Right cardiac atrium (tissue), 5 donors: ENCODE measurements at regions of chr1 and their contacts with region 1.

Region 1: GRCh38 chr1:42747125-42747524 is 7.1 kb upstream of the CLDN19 start:
- DNase-seq: peak; percentile 52 to 82 (median 81)
- ATAC-seq: peak; percentile 61 to 65
- H3K4me3 ChIP-seq: no peak overlapping the region
- H3K27ac ChIP-seq: no peak overlapping the region
- H3K4me1 ChIP-seq: no peaks in the 10 kb centered on the region
- H3K27me3 ChIP-seq: no peaks in the 10 kb centered on the region

Region 2: GRCh38 chr1:42146626-42147320 is 600.4 kb before region 1 on chr1:
- intact Hi-C with region 1: loop called in 1 of 4 experiments (anchors 10 kb)
- DNase-seq: peak; percentile 51 to 80 (median 79)
- ATAC-seq: peak; percentile 42 to 65
- H3K4me3 ChIP-seq: no peak overlapping the region
- H3K27ac ChIP-seq: no peak overlapping the region
- H3K4me1 ChIP-seq: no peaks in the 10 kb centered on the region
- H3K27me3 ChIP-seq: no peaks in the 10 kb centered on the region

Region 3: GRCh38 chr1:42576935-42577334 is 170.2 kb before region 1 on chr1:
- intact Hi-C with region 1: loop called (anchors 5 to 10 kb)
- DNase-seq: no peak
- ATAC-seq: no peak
- H3K4me3 ChIP-seq: no peak overlapping the region
- H3K27ac ChIP-seq: no peak overlapping the region
- H3K4me1 ChIP-seq: no peaks in the 10 kb centered on the region
- H3K27me3 ChIP-seq: no peaks in the 10 kb centered on the region

Region 4: DNA sequence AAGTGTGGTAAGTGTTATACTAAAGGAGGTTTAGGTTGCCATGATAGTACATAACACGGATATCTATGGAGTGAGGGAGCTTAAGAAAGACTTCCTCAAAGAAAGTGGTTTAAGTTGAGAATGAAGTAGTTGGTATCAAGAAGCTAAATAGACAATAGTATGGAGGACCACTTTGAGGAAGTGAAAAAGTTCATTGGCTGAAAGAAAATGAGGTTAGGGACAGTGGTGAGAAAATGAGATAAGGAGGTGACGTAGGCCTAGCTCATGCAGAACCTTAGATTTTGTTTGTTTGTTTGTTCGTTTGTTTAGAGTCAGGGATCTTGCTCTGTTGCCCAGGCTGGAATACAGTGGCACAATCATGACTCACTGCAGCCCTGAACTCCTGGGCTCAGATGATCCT is 161.1 kb before region 1 on chr1:
- intact Hi-C with region 1: loop called in 2 of 4 experiments (anchors 5 to 10 kb)
- DNase-seq: no peak
- ATAC-seq: no peak
- H3K4me3 ChIP-seq: no peak overlapping the region
- H3K27ac ChIP-seq: no peak overlapping the region
- H3K4me1 ChIP-seq: no peaks in the 10 kb centered on the region
- H3K27me3 ChIP-seq: no peaks in the 10 kb centered on the region